AG04449 (cell line): ENCODE measurements at regions of chr7 and their contacts with region 1.

Region 1: GRCh38 chr7:16564909-16565426 is 38.3 kb downstream of the LRRC72 start:
- DNase-seq: peak; percentile 9
- H3K4me3 ChIP-seq: no peak overlapping the region
- CTCF ChIP-seq: peak; percentile 54

Region 2: GRCh38 chr7:16078076-16078952 is 486.7 kb before region 1 on chr7:
- CTCF ChIA-PET with region 1: interaction called, 104 read pairs
- POLR2A ChIA-PET with region 1: no interaction called
- DNase-seq: no peak
- H3K4me3 ChIP-seq: no peak overlapping the region
- CTCF ChIP-seq: peak; percentile 63

Region 3: DNA sequence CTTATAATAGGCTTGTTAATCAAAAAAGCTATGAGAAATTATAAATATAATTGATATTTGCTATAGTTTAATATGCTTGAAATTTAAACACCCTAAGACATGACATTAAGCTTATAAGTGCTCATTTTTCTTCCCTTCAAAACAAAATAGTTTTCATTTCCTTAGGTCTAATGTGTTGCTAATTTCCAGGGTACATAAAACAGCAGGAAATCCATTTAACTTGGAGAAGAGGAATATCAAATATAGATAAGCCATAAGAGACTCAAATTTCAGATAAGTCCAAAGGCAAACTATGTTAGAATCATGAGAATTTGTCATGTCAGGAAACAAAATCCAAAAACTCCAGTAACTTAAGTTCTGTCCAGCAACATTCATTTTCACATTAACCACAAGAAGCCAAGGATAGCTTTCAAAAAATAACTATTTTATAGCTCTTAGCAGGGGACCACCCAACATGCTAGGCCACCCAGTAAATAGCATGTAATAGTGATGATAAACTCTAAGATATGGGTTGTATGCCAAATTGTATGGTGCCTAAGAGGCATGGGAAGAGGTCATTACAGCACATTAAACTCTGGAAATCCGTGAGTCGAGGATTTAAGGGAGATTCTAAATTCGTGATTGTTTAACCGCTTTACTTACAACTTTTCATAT is 441.7 kb before region 1 on chr7:
- CTCF ChIA-PET with region 1: interaction called, 30 read pairs
- POLR2A ChIA-PET with region 1: no interaction called
- DNase-seq: no peak
- H3K4me3 ChIP-seq: no peak overlapping the region
- CTCF ChIP-seq: no peak

Region 4: GRCh38 chr7:16579216-16579615 is 14.2 kb after region 1 on chr7:
- CTCF ChIA-PET with region 1: interaction called, 54 read pairs
- POLR2A ChIA-PET with region 1: no interaction called
- DNase-seq: no peak
- H3K4me3 ChIP-seq: no peak overlapping the region
- CTCF ChIP-seq: no peak

Region 5: DNA sequence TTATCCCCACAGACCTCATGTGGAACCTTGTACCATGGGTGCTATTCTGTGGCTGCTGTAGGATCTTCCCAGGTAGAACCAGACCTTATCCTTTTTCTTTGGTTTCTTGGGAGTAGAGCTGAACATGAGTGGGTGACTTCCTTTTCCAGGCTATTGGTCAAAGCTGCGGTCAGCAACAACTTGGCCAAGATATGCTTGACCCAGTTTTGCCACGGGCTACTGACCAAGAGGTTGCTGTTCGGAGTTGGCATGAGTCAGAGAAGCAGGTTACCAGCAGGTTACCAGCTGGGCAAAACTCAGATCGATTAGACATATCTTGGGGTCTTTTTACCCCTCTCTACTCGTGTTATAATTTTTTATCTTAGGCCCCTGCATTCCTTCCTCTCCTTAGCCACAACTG is 1893.9 kb after region 1 on chr7:
- CTCF ChIA-PET with region 1: no interaction called
- POLR2A ChIA-PET with region 1: no interaction called
- DNase-seq: no peak
- H3K4me3 ChIP-seq: no peak overlapping the region
- CTCF ChIP-seq: no peak